Heart right ventricle (tissue), 16 donors: ENCODE measurements at regions of chr15 and their contacts with region 1.

Region 1: GRCh38 chr15:88657326-88658069 is 18.7 kb downstream of the ISG20 start:
- DNase-seq: no peak
- ATAC-seq: peak in 6 of 8 donors; percentile 32 to 58 (median 54)
- H3K4me3 ChIP-seq: no peak overlapping the region
- H3K27ac ChIP-seq: no peak overlapping the region
- H3K4me1 ChIP-seq: peaks cover 0 to 14% (median 4%) of the 10 kb centered on the region in 9 donors
- H3K27me3 ChIP-seq: no peaks in the 10 kb centered on the region
- CTCF ChIP-seq: peak; percentile 53 to 77 (median 74)

Region 2: GRCh38 chr15:88600524-88600923 is 57.0 kb before region 1 on chr15:
- intact Hi-C with region 1: no loop called
- DNase-seq: no peak
- ATAC-seq: no peak
- H3K4me3 ChIP-seq: no peak overlapping the region
- H3K27ac ChIP-seq: no peak overlapping the region
- H3K4me1 ChIP-seq: peaks cover 0 to 18% (median 13%) of the 10 kb centered on the region in 9 donors
- H3K27me3 ChIP-seq: peaks cover 12 to 36% (median 31%) of the 10 kb centered on the region in 7 donors
- CTCF ChIP-seq: no peak

Region 3: GRCh38 chr15:88610701-88611231 is 46.7 kb before region 1 on chr15:
- intact Hi-C with region 1: no loop called
- DNase-seq: no peak
- ATAC-seq: peak in 1 of 8 donors; percentile 21
- H3K4me3 ChIP-seq: no peak overlapping the region
- H3K27ac ChIP-seq: no peak overlapping the region
- H3K4me1 ChIP-seq: peaks cover 0 to 6% (median 0%) of the 10 kb centered on the region in 9 donors
- H3K27me3 ChIP-seq: peaks cover 8 to 31% (median 26%) of the 10 kb centered on the region in 7 donors
- CTCF ChIP-seq: peak in 1 of 9 donors; percentile 10

Region 4: GRCh38 chr15:88897456-88898194 is 240.1 kb after region 1 on chr15:
- intact Hi-C with region 1: loop called in 2 of 10 experiments (anchors 10 kb)
- DNase-seq: peak; percentile 86 to 91
- ATAC-seq: peak; percentile 80 to 96 (median 92)
- H3K4me3 ChIP-seq: peak overlapping the region in 1 of 10 donors; percentile 33
- H3K27ac ChIP-seq: peak overlapping the region; percentile 37 to 91 (median 78)
- H3K4me1 ChIP-seq: peaks cover 27 to 81% (median 47%) of the 10 kb centered on the region in 9 donors
- H3K27me3 ChIP-seq: peaks cover 0 to 24% (median 0%) of the 10 kb centered on the region in 7 donors
- CTCF ChIP-seq: peak; percentile 59 to 92 (median 74)